ENCODE measurements at regions of chr5 and their contacts with region 1.

Region 1: DNA sequence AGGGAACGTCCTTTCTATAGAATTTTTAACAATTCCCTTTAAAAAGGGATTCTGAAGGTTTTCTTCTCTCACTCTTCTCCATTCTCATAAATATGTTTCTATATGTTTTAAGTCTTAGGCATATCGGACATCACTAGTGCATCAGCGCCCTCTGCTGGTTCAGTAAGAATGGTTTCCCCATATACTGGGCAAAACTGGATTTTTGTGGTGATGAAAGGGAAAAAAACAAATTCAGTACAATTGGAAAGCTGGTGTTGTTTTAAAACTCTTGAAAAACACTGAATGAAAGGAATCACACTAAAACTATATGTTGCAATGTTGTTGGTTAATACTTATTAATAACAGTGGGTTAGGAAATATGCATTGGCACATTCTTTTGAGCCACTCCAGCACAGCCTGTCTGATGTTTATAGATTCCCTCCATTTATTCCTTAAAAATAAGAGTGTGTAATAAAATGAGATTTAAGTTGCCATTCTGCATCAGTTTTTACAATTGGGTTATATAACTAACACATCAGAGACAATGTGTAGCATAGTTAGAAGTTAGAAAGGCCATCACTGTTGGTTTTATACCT is 15.8 kb downstream of the CWC27 start:
- DNase-seq: peak in 7 of 10 donors; percentile 64 to 93 (median 70)

Region 2: DNA sequence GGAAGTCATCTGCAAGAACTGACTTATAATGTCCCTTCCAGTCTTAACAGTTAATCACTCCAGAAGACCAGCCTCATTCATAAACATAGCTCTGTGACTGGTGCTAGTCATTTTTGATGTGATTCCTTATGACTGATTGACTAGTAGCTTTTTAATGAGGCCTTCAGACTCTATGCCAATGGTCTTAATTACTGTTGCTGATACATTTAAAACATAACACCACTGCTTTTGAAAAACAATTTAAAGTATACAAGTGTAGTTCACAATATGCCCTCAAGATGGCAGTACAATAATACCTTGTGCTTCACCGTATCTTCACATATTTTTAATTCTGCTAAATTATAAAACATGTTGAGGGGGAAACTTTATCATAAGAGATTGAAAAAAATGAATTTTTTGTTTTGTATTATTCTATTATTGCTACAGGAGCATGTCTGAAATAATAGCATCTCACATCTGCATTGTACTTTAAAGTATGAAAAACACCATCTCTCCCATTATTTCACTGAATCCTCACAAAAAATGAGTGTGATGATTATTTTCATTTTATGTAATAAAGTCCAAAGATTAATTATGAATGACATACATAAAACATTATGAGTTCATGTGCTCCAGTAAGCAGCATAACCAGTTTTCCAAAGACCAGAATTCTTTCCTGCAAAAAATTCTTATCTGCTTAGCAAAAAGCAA is 149.4 kb before region 1 on chr5:
- intact Hi-C with region 1: loop called (anchors 1 kb)
- DNase-seq: no peak

Region 3: DNA sequence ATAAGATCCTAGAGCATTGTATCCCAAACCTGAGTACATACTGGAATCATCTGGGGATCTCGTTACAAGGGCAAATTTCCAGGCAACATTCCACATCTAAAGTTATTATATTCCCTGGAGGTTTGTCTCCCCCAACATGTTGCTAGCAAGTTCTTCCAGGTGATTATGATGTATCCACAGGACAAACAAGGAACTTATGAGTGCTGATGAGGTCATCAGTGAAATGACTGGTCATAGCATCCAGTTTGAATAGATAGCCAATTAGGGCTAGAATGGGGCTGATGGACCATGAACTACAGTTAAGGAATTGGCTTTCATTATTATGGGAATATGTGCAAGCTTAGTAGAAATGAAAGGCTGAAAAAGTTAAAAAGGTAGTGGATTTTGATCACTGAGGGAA is 99.4 kb after region 1 on chr5:
- intact Hi-C with region 1: no loop called
- DNase-seq: no peak